Right cardiac atrium (tissue), 5 donors: ENCODE measurements at regions of chr4 and their contacts with region 1.

Region 1: DNA sequence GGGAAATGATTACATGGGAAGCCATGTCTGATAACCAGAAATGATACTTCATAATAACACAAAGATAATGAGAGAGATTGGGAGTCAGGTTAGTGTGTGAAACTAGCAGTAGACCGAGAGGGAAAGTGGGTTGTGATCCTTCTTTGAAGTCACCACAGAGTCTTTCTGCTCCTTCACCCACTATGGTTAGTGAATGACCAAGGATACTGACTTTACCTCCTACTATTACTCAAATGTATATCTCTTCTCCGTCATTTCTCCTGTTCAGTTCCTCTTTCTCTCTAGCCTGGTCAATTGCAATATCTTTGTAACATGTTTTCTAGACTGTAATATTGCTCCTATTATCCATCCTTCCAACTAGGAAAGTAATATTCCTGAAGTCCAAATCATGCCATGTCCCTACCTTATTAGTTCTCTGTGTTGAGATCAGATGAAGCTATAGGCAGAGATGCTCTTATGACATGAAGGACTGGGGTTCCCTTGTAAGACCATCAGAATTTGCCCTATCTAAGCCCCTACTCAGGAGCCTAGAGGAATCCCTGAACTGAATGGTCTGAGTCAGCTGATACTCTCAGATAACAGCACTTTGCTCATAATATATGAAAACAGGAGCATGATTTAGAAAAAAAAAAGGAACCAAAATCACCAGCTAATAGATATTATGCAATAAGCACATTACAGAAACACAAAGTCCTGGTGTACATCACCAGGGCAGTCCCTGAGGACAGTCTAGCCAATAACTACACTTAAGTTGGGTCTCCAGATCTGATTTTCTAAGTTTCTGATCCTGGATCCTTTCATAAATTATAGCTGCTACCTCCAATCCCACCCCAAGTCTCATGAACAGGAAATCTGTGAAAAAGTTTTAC is 81.2 kb downstream of the SHROOM3 start:
- DNase-seq: no peak
- ATAC-seq: no peak
- H3K4me3 ChIP-seq: no peak overlapping the region
- H3K27ac ChIP-seq: no peak overlapping the region
- H3K4me1 ChIP-seq: no peaks in the 10 kb centered on the region
- H3K27me3 ChIP-seq: no peaks in the 10 kb centered on the region

Region 2: GRCh38 chr4:76758290-76758882 is 242.2 kb after region 1 on chr4:
- intact Hi-C with region 1: loop called (anchors 5 to 10 kb)
- DNase-seq: peak in 1 of 3 donors; percentile 30
- ATAC-seq: peak; percentile 50 to 63
- H3K4me3 ChIP-seq: no peak overlapping the region
- H3K27ac ChIP-seq: no peak overlapping the region
- H3K4me1 ChIP-seq: no peaks in the 10 kb centered on the region
- H3K27me3 ChIP-seq: no peaks in the 10 kb centered on the region

Region 3: DNA sequence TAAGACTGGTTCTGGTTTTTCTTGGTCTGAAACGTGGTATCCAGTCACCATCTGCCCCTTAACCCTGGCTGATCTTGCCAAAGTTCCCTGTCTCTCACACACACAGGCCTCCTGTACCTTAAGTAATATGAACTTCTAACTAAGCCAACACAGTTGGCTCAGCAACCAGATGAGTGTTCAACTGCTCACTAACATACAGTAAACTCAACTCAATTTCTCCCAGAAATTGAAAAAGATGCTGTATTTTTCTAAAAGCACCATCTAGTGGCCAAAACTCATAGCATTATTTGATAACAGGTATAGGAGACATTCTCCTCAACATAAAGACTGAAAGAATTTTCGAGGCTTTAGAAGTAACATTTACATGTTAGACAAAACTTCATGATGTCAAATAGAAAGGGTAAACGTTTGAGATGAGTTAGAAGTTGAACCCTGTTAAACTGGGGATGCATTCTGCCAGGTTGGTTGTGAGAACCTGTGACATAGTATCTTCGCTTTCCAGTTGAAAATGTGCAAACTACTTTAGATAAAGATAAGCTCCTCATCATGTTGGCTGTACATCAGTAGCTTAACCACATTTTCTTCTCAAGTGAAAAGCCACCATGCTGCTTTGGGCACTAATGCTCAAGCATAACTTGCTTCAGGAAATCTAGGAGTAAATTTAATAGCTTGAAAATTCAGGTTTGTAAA is 528.4 kb after region 1 on chr4:
- intact Hi-C with region 1: loop called in 2 of 4 experiments (anchors 10 kb)
- DNase-seq: no peak
- ATAC-seq: peak; percentile 20 to 51
- H3K4me3 ChIP-seq: no peak overlapping the region
- H3K27ac ChIP-seq: peak overlapping the region; percentile 32
- H3K4me1 ChIP-seq: no peaks in the 10 kb centered on the region
- H3K27me3 ChIP-seq: no peaks in the 10 kb centered on the region

Region 4: DNA sequence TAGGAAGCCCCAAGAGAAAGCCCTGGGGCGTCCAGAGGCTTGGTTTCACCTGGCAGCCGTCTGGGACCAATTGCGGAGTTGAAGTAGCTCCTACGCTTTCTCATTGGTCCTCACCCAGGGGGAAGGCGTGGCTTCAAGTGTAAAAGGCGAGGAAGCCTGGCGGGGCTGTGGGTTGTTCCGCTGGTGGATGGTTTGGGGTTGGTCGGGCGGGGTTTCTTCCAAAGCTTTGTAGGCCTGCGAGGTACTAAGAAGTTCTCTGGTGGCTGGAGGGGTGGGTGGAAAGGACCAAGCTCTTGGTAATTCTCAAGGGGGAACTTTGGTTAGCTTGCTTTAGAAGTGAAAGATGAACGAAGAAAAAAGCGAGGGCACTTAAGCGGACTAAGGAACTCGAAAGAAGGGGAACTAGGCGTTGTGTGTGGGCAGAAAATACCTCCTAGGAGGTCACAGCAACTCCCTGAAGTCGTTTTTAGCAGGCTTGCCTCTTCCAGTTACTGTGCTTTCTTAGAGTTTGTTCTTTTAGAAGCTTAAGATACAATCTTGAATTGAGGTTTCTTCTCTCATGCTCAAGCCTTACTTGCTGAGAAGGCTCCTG is 677.4 kb after region 1 on chr4:
- intact Hi-C with region 1: loop called in 1 of 4 experiments (anchors 10 kb)
- DNase-seq: peak; percentile 39 to 78 (median 71)
- ATAC-seq: peak; percentile 50 to 54
- H3K4me3 ChIP-seq: no peak overlapping the region
- H3K27ac ChIP-seq: no peak overlapping the region
- H3K4me1 ChIP-seq: no peaks in the 10 kb centered on the region
- H3K27me3 ChIP-seq: no peaks in the 10 kb centered on the region

Region 5: DNA sequence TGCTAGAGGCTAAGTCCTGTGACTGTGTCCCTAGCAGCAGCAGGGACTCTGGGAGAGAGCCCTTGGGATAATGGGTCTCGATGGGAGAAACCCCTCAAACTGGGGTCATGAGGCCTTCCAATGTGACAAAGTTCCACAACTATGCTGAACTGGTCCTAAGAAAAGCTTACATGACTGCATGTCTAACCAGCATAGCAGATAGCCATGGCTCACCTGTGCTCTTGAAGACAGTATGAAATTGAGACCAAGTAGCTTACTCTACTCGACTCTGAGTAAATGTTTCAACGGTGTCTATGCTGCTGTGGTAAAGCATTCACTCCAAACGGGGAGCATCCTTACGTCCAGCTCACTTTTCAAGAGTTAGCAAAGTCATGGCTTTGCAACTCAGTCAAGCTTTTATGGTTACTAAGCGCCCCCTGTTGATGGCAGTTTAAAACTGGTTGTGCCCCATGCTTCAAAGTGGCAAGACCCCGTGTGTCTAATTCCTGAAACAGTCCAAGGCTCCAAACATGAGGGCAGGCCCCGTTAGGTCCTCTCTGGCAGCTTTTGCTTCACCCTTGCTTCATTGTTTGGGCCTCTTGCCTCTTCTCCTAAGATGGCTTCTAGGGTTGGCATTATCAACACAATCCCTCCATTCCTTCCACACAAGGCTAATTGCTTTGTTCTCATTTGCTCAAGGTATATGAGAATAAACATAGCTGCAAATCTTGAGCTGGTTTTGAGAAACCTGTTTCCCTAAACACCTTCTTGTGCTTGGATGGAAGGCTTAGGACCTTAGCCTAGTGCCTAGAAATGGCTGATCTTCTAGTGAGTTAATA is 687.4 kb after region 1 on chr4:
- intact Hi-C with region 1: loop called in 3 of 4 experiments (anchors 10 kb)
- DNase-seq: peak; percentile 32 to 51 (median 49)
- ATAC-seq: peak; percentile 73 to 81
- H3K4me3 ChIP-seq: no peak overlapping the region
- H3K27ac ChIP-seq: no peak overlapping the region
- H3K4me1 ChIP-seq: no peaks in the 10 kb centered on the region
- H3K27me3 ChIP-seq: no peaks in the 10 kb centered on the region